Activated CD8-positive, alpha-beta T cell treated with anti-CD3 and anti-CD28 coated beads, Interleukin-2, amount 10 ng/mL, durations not matched to agents 7 days and 5 days (primary cell): ENCODE measurements at regions of chr19 and their contacts with region 1.

Region 1: DNA sequence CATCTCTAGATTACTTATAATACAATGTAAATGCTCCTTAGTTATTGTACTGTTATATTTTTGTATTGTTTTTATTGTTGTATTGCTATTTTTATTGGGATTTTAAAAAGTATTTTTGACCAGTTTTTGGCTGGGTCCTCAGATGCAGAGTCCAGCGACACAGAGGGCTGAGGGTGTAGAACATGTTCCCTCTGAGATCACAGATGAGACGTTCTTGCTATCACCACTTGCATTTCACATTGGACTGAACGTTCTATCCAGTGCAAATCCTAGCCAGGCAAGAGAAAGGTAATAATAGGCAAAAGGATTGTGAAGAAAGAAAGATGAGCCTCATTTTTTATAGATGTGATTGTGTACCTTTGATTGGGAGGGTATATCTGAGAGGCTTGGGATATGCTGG is 15.0 kb downstream of the ZSCAN5A start:
- DNase-seq: no peak
- ATAC-seq: no peak
- H3K4me3 Mint-ChIP-seq: no peak overlapping the region
- H3K27ac Mint-ChIP-seq: no peak overlapping the region
- H3K4me1 Mint-ChIP-seq: peaks cover 18% of the 10 kb centered on the region
- H3K27me3 Mint-ChIP-seq: no peaks in the 10 kb centered on the region

Region 2: GRCh38 chr19:56314562-56315077 is 14.9 kb after region 1 on chr19 and contains the start of gene ZSCAN5A:
- CTCF ChIA-PET with region 1: interaction called, 11 read pairs
- POLR2A ChIA-PET with region 1: interaction called, 3 read pairs
- DNase-seq: peak; percentile 96
- ATAC-seq: peak; percentile 86
- H3K4me3 Mint-ChIP-seq: peak within 1 kb of the TSS; percentile 89
- H3K27ac Mint-ChIP-seq: peak within 1 kb of the TSS; percentile 98
- H3K4me1 Mint-ChIP-seq: peaks cover 27% of the 10 kb centered on the region
- H3K27me3 Mint-ChIP-seq: no peaks in the 10 kb centered on the region
- total RNA-seq, gene ZSCAN5A: 8.2 to 12.1 TPM